Psoas muscle (tissue), 8 donors: ENCODE measurements at regions of chr3 and their contacts with region 1.

Region 1: DNA sequence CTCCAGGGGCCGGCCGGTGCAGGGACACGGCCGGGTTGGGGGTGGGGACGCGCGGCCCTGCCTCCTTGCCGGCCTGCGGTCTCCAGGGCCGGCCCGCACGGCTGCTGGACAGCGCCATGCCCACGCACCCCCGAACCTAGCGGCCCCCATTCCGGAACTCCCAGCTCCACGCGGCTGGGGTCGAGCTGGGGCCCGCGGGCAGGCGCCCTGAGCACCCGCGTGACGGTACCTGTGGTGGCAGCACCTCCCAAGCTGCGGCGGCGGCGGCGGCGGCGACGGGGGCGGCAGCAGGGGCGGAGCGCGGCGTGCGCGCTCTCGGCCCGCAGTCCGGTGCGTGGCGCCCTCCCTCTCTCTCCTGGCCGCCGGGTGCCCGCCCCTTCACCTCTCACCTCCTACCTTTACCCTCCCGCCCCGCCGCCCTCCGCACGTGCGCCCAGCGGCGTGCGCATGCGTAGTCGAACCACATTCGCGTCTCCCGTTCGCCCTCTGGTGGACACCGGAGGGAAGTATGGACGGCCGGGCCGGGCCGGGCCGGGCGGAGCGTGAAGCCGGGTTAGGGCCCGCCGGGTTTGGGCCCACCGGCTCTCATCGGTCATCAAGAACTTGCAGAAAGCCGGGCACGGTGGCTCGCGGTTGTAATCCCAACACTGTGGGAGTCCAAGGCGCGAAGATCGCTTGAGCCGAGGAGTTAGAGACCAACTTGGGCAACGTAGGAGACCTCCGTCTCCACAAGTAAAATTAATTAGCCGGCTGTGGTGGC is at the start of gene SCAP:
- DNase-seq: peak; percentile 94 to 97
- ATAC-seq: peak; percentile 97 to 98 (median 98)
- H3K4me3 ChIP-seq: peak within 1 kb of the TSS; percentile 97
- H3K27ac ChIP-seq: peak within 1 kb of the TSS; percentile 90
- H3K4me1 ChIP-seq: peaks cover 22% of the 10 kb centered on the region
- H3K27me3 ChIP-seq: no peaks in the 10 kb centered on the region
- CTCF ChIP-seq: peak; percentile 98
- total RNA-seq, gene SCAP: 34.7 to 47.5 (median 40.7) TPM

Region 2: GRCh38 chr3:47404955-47405790 is 70.6 kb before region 1 on chr3:
- intact Hi-C with region 1: no loop called
- DNase-seq: peak in 1 of 2 donors; percentile 35
- ATAC-seq: peak; percentile 6 to 13 (median 8)
- H3K4me3 ChIP-seq: no peak overlapping the region
- H3K27ac ChIP-seq: no peak overlapping the region
- H3K4me1 ChIP-seq: peaks cover 6% of the 10 kb centered on the region
- H3K27me3 ChIP-seq: no peaks in the 10 kb centered on the region
- CTCF ChIP-seq: no peak

Region 3: GRCh38 chr3:47420511-47421484 is 55.0 kb before region 1 on chr3:
- intact Hi-C with region 1: loop called (anchors 1 to 2 kb)
- DNase-seq: peak; percentile 86 to 92
- ATAC-seq: peak; percentile 69 to 84 (median 76)
- H3K4me3 ChIP-seq: no peak overlapping the region
- H3K27ac ChIP-seq: peak overlapping the region; percentile 74
- H3K4me1 ChIP-seq: peaks cover 13% of the 10 kb centered on the region
- H3K27me3 ChIP-seq: no peaks in the 10 kb centered on the region
- CTCF ChIP-seq: peak; percentile 92

Region 4: GRCh38 chr3:47443611-47443995 is 32.1 kb before region 1 on chr3:
- intact Hi-C with region 1: loop called in 1 of 2 experiments (anchors 2 kb)
- DNase-seq: no peak
- ATAC-seq: peak; percentile 28 to 48 (median 41)
- H3K4me3 ChIP-seq: peak overlapping the region; percentile 30
- H3K27ac ChIP-seq: peak overlapping the region; percentile 91
- H3K4me1 ChIP-seq: peaks cover 28% of the 10 kb centered on the region
- H3K27me3 ChIP-seq: no peaks in the 10 kb centered on the region
- CTCF ChIP-seq: no peak